Heart left ventricle (tissue), 16 donors: ENCODE measurements at regions of chr7 and their contacts with region 1.

Region 1: DNA sequence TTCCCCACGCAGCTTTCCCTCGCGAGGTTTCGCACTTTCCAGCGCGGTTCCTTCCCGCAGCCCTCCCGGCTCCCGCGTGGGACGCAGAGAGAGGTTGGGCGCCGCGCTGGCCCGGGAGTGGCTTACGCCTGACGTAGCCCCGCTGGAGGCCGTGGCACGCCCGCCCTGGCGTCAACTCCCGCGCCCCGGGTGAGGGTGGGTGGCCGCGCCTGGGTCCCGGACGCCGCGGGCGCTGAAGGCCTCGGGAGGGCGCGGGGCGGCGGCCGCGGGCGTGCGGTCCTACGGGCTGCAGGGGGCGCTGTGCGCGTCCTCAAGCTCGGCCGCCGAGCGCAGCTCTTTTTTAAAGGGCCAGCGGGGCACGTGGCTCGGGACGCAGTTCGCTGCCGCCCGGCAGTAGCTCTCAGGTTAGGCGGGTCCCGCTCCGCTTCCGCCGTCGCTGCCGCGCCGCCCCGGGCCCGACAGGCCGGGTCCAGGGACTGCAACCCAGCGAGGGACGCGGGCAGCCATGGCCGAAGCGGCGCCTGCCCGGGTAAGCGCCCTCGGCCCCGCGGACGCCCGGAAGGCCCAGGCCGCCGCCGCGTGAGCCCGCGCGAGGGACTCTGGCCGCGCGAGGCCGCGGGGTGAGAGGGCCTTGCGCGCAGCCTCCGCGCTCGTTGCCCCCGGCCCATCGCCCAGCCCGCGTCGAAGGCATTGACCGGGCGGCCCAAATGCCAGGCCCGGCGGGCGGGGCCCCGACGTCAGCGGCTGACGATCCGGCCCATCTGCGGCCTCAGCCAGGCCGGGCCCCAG is at the start of gene ZNF783:
- DNase-seq: peak; percentile 86 to 94 (median 90)
- ATAC-seq: peak; percentile 93 to 97 (median 96)
- H3K4me3 ChIP-seq: peak within 1 kb of the TSS; percentile 41 to 93 (median 64)
- H3K27ac ChIP-seq: peak within 1 kb of the TSS; percentile 77 to 94 (median 90)
- H3K4me1 ChIP-seq: peaks cover 0 to 28% (median 15%) of the 10 kb centered on the region in 12 donors
- H3K27me3 ChIP-seq: no peaks in the 10 kb centered on the region
- CTCF ChIP-seq: peak; percentile 54 to 97 (median 88)
- POLR2A ChIP-seq: peak in 1 of 2 donors; percentile 42
- total RNA-seq, gene ZNF783: 2.8 to 9.0 (median 3.4) TPM

Region 2: DNA sequence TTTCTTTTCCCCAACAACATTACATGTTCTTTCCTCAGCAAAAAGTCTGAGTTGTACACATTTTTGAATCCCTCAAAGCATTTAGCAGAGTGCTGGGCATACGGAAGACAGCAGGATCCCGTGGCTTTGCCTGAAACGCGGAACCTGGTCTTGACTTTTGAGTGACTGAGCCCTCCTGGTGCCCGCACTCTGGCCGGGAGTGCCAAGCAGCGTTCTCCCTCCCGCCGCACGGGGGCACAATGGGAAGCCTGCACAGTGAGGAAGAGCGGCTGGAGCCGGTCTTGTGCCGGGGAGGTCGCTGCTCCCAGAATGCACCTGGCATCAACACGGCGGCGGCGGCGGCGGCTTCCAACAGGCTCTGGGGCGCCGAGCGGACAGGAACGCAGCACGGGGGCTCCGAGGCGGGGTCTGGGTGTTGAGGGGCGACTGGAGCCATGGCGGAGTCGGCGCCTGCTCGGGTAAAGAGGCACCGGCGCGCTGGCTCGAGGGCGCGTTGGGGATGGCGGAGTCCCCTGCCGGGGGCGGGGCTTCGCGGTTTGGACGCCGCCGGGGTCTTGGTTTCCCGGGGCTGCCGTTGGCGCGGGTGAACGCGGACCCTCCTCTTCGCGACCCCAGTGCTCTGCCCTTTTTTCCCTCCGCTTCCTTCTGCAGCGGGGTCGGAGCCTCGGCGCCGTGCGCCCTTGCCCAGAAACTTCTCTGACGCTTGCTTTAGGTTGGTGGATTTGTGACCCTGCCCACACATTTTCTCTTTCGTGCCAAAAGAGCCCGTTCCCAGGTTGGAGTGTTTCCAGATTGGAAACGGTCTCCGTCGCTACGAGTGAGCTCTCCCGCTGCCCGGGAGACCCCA is 22.5 kb before region 1 on chr7 and contains the start of gene ZNF212:
- intact Hi-C with region 1: loop called in 1 of 10 experiments (anchors 1 kb)
- DNase-seq: peak; percentile 89 to 94 (median 92)
- ATAC-seq: peak; percentile 98 to 100 (median 100)
- H3K4me3 ChIP-seq: peak within 1 kb of the TSS; percentile 69 to 99 (median 89)
- H3K27ac ChIP-seq: peak within 1 kb of the TSS in 10 of 12 donors; percentile 20 to 83 (median 74)
- H3K4me1 ChIP-seq: peaks cover 3 to 24% (median 15%) of the 10 kb centered on the region in 12 donors
- H3K27me3 ChIP-seq: no peaks in the 10 kb centered on the region
- CTCF ChIP-seq: peak; percentile 70 to 96 (median 88)
- POLR2A ChIP-seq: peak in 1 of 2 donors; percentile 48
- total RNA-seq, gene ZNF212: 3.4 to 6.3 (median 4.3) TPM

Region 3: GRCh38 chr7:149284850-149285626 is 23.0 kb after region 1 on chr7:
- intact Hi-C with region 1: loop called in 1 of 10 experiments (anchors 1 kb)
- DNase-seq: peak; percentile 94 to 97 (median 96)
- ATAC-seq: peak; percentile 96 to 99 (median 98)
- H3K4me3 ChIP-seq: peak overlapping the region; percentile 42 to 90 (median 68)
- H3K27ac ChIP-seq: peak overlapping the region in 5 of 12 donors; percentile 25 to 63 (median 58)
- H3K4me1 ChIP-seq: peaks cover 0 to 19% (median 7%) of the 10 kb centered on the region in 12 donors
- H3K27me3 ChIP-seq: no peaks in the 10 kb centered on the region
- CTCF ChIP-seq: peak in 2 of 12 donors; percentile 3 to 10
- POLR2A ChIP-seq: peak in 1 of 2 donors; percentile 27

Region 4: GRCh38 chr7:149317986-149318672 is 56.1 kb after region 1 on chr7:
- intact Hi-C with region 1: no loop called
- DNase-seq: no peak
- ATAC-seq: no peak
- H3K4me3 ChIP-seq: no peak overlapping the region
- H3K27ac ChIP-seq: no peak overlapping the region
- H3K4me1 ChIP-seq: no peaks in the 10 kb centered on the region
- H3K27me3 ChIP-seq: peaks cover 0 to 24% (median 3%) of the 10 kb centered on the region in 9 donors
- CTCF ChIP-seq: no peak
- POLR2A ChIP-seq: no peak

Region 5: GRCh38 chr7:149422129-149422913 is 160.3 kb after region 1 on chr7:
- intact Hi-C with region 1: loop called in 2 of 10 experiments (anchors 2 to 10 kb)
- DNase-seq: peak; percentile 60 to 85 (median 61)
- ATAC-seq: peak; percentile 60 to 97 (median 93)
- H3K4me3 ChIP-seq: peak overlapping the region; percentile 29 to 65 (median 54)
- H3K27ac ChIP-seq: peak overlapping the region in 7 of 12 donors; percentile 3 to 77 (median 33)
- H3K4me1 ChIP-seq: peaks cover 0 to 18% (median 7%) of the 10 kb centered on the region in 12 donors
- H3K27me3 ChIP-seq: no peaks in the 10 kb centered on the region
- CTCF ChIP-seq: peak; percentile 1 to 84 (median 52)
- POLR2A ChIP-seq: no peak

Region 6: GRCh38 chr7:149440222-149440621 is 178.2 kb after region 1 on chr7:
- intact Hi-C with region 1: no loop called
- DNase-seq: no peak
- ATAC-seq: no peak
- H3K4me3 ChIP-seq: no peak overlapping the region
- H3K27ac ChIP-seq: no peak overlapping the region
- H3K4me1 ChIP-seq: no peaks in the 10 kb centered on the region
- H3K27me3 ChIP-seq: no peaks in the 10 kb centered on the region
- CTCF ChIP-seq: no peak
- POLR2A ChIP-seq: no peak

Region 7: DNA sequence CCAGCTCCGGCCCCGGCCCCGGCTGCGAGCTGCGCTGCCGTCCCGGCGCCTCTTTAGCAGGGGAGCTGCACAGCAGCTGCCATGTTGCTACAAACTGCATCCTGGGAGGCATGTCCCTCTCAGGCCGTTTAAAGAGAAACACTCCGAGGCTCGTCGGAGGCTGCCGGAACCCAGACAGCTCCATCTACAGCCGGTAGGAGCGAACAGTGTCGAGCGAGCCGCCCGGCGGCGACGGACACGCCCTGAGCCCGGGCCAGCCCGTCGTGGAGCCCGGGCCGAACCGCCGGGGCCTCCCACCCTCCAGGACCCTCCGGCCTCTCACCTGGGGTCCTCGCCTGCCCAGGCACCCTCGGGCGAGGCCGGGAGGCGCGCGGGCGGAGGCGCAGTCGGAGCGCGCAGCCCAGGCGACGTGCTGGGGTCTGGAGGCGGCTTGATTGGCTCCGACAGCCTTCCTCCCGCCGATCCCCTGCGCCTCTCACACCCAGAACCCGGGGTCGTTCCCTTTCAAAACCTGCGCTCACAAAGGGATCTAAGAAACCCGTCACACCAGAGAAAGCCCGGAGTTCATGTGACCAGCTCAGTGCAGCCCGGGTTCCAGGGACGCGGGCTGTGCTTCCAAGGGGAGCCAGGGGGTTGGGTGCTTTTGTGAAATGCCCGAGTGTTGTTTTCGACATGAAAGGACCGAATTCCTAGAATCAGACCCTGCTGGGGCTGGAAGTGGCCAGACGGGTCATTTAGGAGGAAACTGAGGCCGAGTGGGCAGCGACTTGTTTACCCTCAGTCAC is 198.7 kb after region 1 on chr7 and contains the start of gene ZNF777:
- intact Hi-C with region 1: loop called in 1 of 10 experiments (anchors 10 kb)
- DNase-seq: peak; percentile 85 to 89 (median 87)
- ATAC-seq: peak; percentile 98 to 100 (median 99)
- H3K4me3 ChIP-seq: peak within 1 kb of the TSS; percentile 51 to 95 (median 80)
- H3K27ac ChIP-seq: peak within 1 kb of the TSS; percentile 50 to 89 (median 81)
- H3K4me1 ChIP-seq: peaks cover 7 to 28% (median 17%) of the 10 kb centered on the region in 12 donors
- H3K27me3 ChIP-seq: peaks cover 0 to 6% (median 0%) of the 10 kb centered on the region in 9 donors
- CTCF ChIP-seq: peak; percentile 18 to 81 (median 50)
- POLR2A ChIP-seq: peak in 1 of 2 donors; percentile 39
- total RNA-seq, gene ZNF777: 6.5 to 10.7 (median 8.3) TPM

Region 8: DNA sequence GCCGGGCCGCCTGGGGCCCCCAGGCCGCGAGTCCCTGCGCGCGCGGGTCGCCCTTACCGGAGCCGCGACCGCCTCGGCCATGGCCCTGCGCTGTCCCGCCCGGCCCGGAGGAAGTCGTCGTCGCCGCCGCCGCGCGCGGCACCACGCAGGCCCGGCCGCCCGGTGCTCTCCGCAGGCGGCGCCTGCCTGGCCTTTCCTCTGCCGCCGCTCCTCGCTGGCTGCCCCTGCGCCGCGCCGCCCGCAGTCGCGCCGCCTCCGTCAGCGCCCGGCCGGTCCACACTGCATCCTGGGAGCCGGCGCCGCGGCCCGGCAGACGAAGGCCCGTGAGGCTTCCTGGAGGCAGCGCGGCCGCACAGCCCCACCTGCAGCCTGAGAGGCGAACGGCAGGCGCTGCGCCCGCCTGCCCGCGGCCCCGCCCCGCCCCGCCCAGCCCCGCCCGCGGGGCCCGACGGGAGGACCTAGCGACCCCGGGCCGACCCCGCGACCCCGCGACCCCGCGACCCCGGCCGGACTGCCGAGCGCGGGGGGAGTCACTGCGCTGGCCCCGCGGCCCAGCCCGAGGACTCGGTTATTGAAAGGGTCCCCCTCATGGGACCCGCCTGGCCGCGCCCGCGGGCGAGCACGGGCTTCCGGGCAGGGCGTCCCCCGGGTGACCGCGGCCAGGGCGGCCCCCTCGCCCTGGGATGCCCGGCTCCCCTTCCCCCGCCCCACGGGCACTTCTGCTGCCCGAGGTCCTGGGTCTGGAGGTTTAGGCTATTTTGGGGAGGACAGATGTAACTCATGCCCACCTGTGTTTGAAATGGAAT is 235.6 kb after region 1 on chr7 and contains the start of gene ZNF746:
- intact Hi-C with region 1: loop called in 3 of 10 experiments (anchors 2 to 10 kb)
- DNase-seq: peak; percentile 78 to 93 (median 85)
- ATAC-seq: peak; percentile 56 to 96 (median 91)
- H3K4me3 ChIP-seq: peak within 1 kb of the TSS; percentile 53 to 89 (median 75)
- H3K27ac ChIP-seq: peak within 1 kb of the TSS; percentile 67 to 90 (median 82)
- H3K4me1 ChIP-seq: peaks cover 0 to 30% (median 19%) of the 10 kb centered on the region in 12 donors
- H3K27me3 ChIP-seq: no peaks in the 10 kb centered on the region
- CTCF ChIP-seq: peak in 10 of 12 donors; percentile 26 to 90 (median 62)
- POLR2A ChIP-seq: peak in 1 of 2 donors; percentile 27
- total RNA-seq, gene ZNF746: 6.7 to 12.8 (median 8.8) TPM

Region 9: GRCh38 chr7:149580328-149580727 is 318.3 kb after region 1 on chr7:
- intact Hi-C with region 1: no loop called
- DNase-seq: no peak
- ATAC-seq: no peak
- H3K4me3 ChIP-seq: no peak overlapping the region
- H3K27ac ChIP-seq: no peak overlapping the region
- H3K4me1 ChIP-seq: no peaks in the 10 kb centered on the region
- H3K27me3 ChIP-seq: no peaks in the 10 kb centered on the region
- CTCF ChIP-seq: no peak
- POLR2A ChIP-seq: no peak

Region 10: GRCh38 chr7:149624419-149625339 is 362.7 kb after region 1 on chr7:
- intact Hi-C with region 1: loop called in 1 of 10 experiments (anchors 10 kb)
- DNase-seq: peak; percentile 93 to 98 (median 96)
- ATAC-seq: peak; percentile 96 to 98 (median 98)
- H3K4me3 ChIP-seq: peak overlapping the region; percentile 79 to 100 (median 97)
- H3K27ac ChIP-seq: peak overlapping the region; percentile 81 to 91 (median 89)
- H3K4me1 ChIP-seq: peaks cover 0 to 30% (median 21%) of the 10 kb centered on the region in 12 donors
- H3K27me3 ChIP-seq: no peaks in the 10 kb centered on the region
- CTCF ChIP-seq: peak in 11 of 12 donors; percentile 94 to 100 (median 99)
- POLR2A ChIP-seq: peak in 1 of 2 donors; percentile 73